Heart left ventricle (tissue), 16 donors: ENCODE measurements at regions of chr2 and their contacts with region 1.

Region 1: GRCh38 chr2:160918906-160919503 is 241.2 kb upstream of the TANK start:
- DNase-seq: peak; percentile 67 to 83 (median 74)
- ATAC-seq: peak; percentile 85 to 91 (median 90)
- H3K4me3 ChIP-seq: no peak overlapping the region
- H3K27ac ChIP-seq: peak overlapping the region in 3 of 12 donors; percentile 6 to 31 (median 17)
- H3K4me1 ChIP-seq: peaks cover 0 to 45% (median 18%) of the 10 kb centered on the region in 12 donors
- H3K27me3 ChIP-seq: no peaks in the 10 kb centered on the region
- CTCF ChIP-seq: peak; percentile 47 to 75 (median 66)
- POLR2A ChIP-seq: no peak

Region 2: GRCh38 chr2:160457588-160457987 is 461.4 kb before region 1 on chr2:
- intact Hi-C with region 1: no loop called
- DNase-seq: no peak
- ATAC-seq: no peak
- H3K4me3 ChIP-seq: no peak overlapping the region
- H3K27ac ChIP-seq: peak overlapping the region in 1 of 12 donors; percentile 40
- H3K4me1 ChIP-seq: peaks cover 5 to 76% (median 45%) of the 10 kb centered on the region in 12 donors
- H3K27me3 ChIP-seq: no peaks in the 10 kb centered on the region
- CTCF ChIP-seq: no peak
- POLR2A ChIP-seq: no peak

Region 3: DNA sequence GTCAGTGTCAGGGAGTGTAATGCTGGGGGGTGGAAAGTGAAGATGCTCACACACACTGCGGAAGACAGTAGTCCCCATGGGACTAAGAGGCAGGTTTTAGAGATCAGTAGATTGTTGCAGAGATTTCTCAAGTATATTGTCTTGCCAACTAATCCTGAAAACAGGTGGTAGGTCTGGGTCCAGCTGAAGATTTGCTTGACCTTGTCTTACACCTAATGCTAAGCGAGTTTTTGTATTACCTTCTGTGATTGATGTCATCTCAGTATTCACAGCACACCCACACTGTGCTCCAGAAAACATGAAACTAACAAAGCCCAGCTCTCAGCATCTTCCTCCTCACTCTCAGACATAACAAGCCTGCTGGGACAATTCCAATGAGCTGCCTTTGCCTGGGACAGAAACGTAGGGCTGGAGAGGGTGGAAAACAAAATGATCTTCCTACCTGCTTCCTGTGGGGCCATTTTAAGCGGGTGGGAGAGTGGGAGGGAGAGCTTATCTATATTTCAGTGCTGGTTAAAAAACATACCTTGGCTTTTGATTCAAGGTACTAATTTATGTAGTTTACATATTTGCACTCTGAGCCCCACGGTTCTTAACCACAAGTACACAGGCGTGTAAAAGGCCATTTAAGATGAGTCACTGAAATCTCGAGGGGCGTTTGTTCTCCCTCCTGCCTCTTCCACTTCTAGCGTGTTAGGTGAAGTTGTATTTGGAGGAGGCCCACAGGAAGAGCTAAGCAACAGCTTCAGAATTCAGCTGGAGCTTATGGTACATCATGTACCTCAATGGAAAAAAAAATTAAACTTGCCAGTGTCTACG is 402.2 kb before region 1 on chr2:
- intact Hi-C with region 1: loop called in 1 of 10 experiments (anchors 5 kb)
- DNase-seq: no peak
- ATAC-seq: peak in 2 of 4 donors; percentile 27 to 60
- H3K4me3 ChIP-seq: no peak overlapping the region
- H3K27ac ChIP-seq: peak overlapping the region in 2 of 12 donors; percentile 7 to 18
- H3K4me1 ChIP-seq: peaks cover 0 to 25% (median 0%) of the 10 kb centered on the region in 12 donors
- H3K27me3 ChIP-seq: no peaks in the 10 kb centered on the region
- CTCF ChIP-seq: no peak
- POLR2A ChIP-seq: no peak

Region 4: GRCh38 chr2:160963957-160964356 is 45.0 kb after region 1 on chr2:
- intact Hi-C with region 1: loop called in 1 of 10 experiments (anchors 2 kb)
- DNase-seq: no peak
- ATAC-seq: no peak
- H3K4me3 ChIP-seq: no peak overlapping the region
- H3K27ac ChIP-seq: no peak overlapping the region
- H3K4me1 ChIP-seq: peaks cover 0 to 22% (median 9%) of the 10 kb centered on the region in 12 donors
- H3K27me3 ChIP-seq: no peaks in the 10 kb centered on the region
- CTCF ChIP-seq: no peak
- POLR2A ChIP-seq: no peak